SK-N-SH (cell line): ENCODE measurements at regions of chr2 and their contacts with region 1.

Region 1: DNA sequence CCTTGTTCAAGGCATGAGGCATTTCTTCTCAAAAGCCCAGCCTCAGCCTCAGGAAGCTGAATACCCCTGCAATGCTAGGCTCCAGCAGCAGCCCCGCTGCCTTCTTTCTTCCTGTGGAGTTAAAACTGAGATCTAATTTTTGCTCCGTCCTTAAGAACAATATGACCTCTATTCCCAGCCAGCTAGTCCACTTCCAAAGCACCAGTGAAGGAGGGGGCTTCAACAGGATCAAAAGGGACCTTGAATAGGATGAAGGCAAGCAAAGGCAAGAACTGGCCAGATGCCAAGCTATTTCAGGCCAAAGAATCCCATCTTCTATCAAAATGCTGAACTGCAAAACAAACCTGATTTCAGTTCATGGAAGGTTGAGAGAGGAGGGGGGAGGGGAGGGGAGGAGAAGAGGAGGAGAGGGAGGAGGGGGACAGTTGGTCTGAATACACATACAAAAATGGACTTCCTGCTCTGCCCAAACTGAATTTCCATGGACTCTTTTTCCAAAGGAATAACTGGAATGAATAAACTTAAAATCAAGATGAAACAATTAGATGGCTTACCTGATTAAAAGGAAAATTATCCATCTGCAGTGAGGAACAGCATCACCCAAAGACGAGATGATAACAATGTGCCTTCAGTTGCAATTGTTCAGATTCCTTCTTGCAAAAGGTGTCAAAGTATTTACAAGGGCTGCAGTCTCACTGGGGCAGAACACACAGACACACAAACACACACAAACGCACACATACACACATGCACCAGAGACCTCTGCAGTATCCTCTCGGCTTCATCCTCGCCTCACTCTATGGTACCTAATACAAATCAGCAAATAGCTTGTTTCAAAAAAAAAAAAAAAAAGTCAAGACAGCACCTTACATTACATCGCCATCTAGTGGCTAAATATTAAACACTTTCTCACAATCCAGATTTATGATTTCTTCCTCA is at the start of gene SCN1A:
- DNase-seq: peak; percentile 25
- H3K4me3 ChIP-seq: no peak within 1 kb of the TSS
- H3K27ac ChIP-seq: no peak within 1 kb of the TSS
- H3K4me1 ChIP-seq: peaks cover 0 to 3% of the 10 kb centered on the region in 2 experiments; a peak in 2 of 4 replicates
- H3K27me3 ChIP-seq: no peaks in the 10 kb centered on the region
- CTCF ChIP-seq: peak; percentile 77
- EP300 ChIP-seq: no peak
- RAD21 ChIP-seq: peak; percentile 78
- polyA plus RNA-seq, gene SCN1A: 0.02 TPM in 1 of 2 replicates, not detected in the other

Region 2: GRCh38 chr2:165953655-165954606 is 173.6 kb before region 1 on chr2 and contains the start of gene TTC21B:
- CTCF ChIA-PET with region 1: interaction called, 44 read pairs
- POLR2A ChIA-PET with region 1: no interaction called
- DNase-seq: peak; percentile 97
- H3K4me3 ChIP-seq: peak within 1 kb of the TSS; percentile 71 to 85
- H3K27ac ChIP-seq: peak within 1 kb of the TSS; percentile 82 to 90
- H3K4me1 ChIP-seq: peaks cover 8% of the 10 kb centered on the region in 2 experiments; a peak in 3 of 4 replicates
- H3K27me3 ChIP-seq: no peaks in the 10 kb centered on the region
- CTCF ChIP-seq: peak; percentile 80
- EP300 ChIP-seq: no peak
- RAD21 ChIP-seq: peak; percentile 64
- polyA plus RNA-seq, gene TTC21B: 9.6 and 10.1 TPM in 2 replicates

Region 3: GRCh38 chr2:166057370-166058164 is 69.9 kb before region 1 on chr2:
- CTCF ChIA-PET with region 1: interaction called, 48 read pairs
- POLR2A ChIA-PET with region 1: no interaction called
- DNase-seq: no peak
- H3K4me3 ChIP-seq: no peak overlapping the region; a peak in 1 of 4 replicates
- H3K27ac ChIP-seq: peak overlapping the region in 1 of 2 experiments; percentile 30; a peak in 2 of 4 replicates
- H3K4me1 ChIP-seq: peaks cover 0 to 6% of the 10 kb centered on the region in 2 experiments; a peak in 2 of 4 replicates
- H3K27me3 ChIP-seq: no peaks in the 10 kb centered on the region
- CTCF ChIP-seq: peak; percentile 81
- EP300 ChIP-seq: no peak
- RAD21 ChIP-seq: peak; percentile 69

Region 4: GRCh38 chr2:166092889-166093288 is 34.6 kb before region 1 on chr2:
- CTCF ChIA-PET with region 1: interaction called, 15 read pairs
- POLR2A ChIA-PET with region 1: no interaction called
- DNase-seq: no peak
- H3K4me3 ChIP-seq: no peak overlapping the region
- H3K27ac ChIP-seq: no peak overlapping the region
- H3K4me1 ChIP-seq: no peaks in the 10 kb centered on the region
- H3K27me3 ChIP-seq: no peaks in the 10 kb centered on the region
- CTCF ChIP-seq: no peak
- EP300 ChIP-seq: no peak
- RAD21 ChIP-seq: no peak

Region 5: GRCh38 chr2:166115589-166115988 is 11.9 kb before region 1 on chr2:
- CTCF ChIA-PET with region 1: interaction called, 21 read pairs
- POLR2A ChIA-PET with region 1: interaction called, 5 read pairs
- DNase-seq: no peak
- H3K4me3 ChIP-seq: no peak overlapping the region
- H3K27ac ChIP-seq: no peak overlapping the region
- H3K4me1 ChIP-seq: no peaks in the 10 kb centered on the region
- H3K27me3 ChIP-seq: no peaks in the 10 kb centered on the region
- CTCF ChIP-seq: no peak
- EP300 ChIP-seq: no peak
- RAD21 ChIP-seq: no peak

Region 6: GRCh38 chr2:166197446-166197845 is 70.0 kb after region 1 on chr2:
- CTCF ChIA-PET with region 1: no interaction called
- POLR2A ChIA-PET with region 1: no interaction called
- DNase-seq: no peak
- H3K4me3 ChIP-seq: no peak overlapping the region
- H3K27ac ChIP-seq: no peak overlapping the region
- H3K4me1 ChIP-seq: no peaks in the 10 kb centered on the region
- H3K27me3 ChIP-seq: no peaks in the 10 kb centered on the region
- CTCF ChIP-seq: no peak
- EP300 ChIP-seq: no peak
- RAD21 ChIP-seq: no peak